Left ventricle myocardium superior (tissue), 1 donor: ENCODE measurements at regions of chr3 and their contacts with region 1.

Region 1: GRCh38 chr3:185983495-185984141 is 45.8 kb upstream of the TRA2B start:
- DNase-seq: peak; percentile 51
- ATAC-seq: peak; percentile 95

Region 2: GRCh38 chr3:186241910-186242821 is 258.5 kb after region 1 on chr3:
- intact Hi-C with region 1: loop called (anchors 10 kb)
- DNase-seq: peak; percentile 82
- ATAC-seq: peak; percentile 93